ENCODE measurements at regions of chr13 and their contacts with region 1.

Region 1: DNA sequence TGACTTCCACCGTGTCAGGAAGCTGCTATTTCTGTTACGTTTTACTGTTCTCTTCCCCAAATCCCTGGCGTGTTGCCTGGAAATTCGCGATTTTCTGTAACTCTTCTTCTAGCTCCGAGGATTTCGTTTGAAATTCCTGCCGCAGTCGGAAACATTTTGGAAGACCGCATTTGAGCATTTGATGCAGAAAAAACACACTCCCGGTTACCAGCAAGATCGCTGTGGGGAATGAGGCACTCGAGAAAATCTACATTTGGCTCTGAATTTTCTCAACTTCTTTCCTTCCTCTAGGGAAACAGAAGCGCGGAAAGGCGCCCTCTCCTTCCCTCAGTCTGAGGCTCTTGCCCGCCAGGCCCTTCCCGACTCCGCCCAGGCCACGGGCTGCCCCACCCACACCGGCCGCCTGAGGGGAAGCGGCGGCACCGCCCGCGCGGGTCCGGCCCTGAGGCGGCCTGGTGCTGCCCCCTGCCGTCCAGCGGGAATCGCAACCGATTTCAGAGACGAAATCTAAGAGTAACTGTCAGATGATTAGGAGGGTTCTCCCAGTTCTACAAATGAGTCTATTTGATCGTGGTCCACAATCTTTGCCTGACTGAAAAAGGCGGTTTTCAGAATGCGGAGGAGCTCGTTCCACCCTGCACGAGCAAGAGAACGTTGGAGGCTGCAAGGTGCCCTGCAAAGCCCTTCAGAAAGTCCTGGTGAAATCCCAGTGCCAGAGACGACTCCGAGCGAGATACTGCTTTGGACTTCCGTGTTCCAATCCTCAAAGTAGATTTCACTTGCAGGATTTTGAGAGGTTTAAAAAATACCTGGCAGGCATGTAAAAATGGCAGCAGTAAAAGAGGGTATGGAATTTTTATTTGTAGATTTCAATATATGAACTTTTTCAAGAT is 18.4 kb upstream of the TUBGCP3 start:
- DNase-seq: peak; percentile 95
- CTCF ChIP-seq: peak; percentile 90

Region 2: DNA sequence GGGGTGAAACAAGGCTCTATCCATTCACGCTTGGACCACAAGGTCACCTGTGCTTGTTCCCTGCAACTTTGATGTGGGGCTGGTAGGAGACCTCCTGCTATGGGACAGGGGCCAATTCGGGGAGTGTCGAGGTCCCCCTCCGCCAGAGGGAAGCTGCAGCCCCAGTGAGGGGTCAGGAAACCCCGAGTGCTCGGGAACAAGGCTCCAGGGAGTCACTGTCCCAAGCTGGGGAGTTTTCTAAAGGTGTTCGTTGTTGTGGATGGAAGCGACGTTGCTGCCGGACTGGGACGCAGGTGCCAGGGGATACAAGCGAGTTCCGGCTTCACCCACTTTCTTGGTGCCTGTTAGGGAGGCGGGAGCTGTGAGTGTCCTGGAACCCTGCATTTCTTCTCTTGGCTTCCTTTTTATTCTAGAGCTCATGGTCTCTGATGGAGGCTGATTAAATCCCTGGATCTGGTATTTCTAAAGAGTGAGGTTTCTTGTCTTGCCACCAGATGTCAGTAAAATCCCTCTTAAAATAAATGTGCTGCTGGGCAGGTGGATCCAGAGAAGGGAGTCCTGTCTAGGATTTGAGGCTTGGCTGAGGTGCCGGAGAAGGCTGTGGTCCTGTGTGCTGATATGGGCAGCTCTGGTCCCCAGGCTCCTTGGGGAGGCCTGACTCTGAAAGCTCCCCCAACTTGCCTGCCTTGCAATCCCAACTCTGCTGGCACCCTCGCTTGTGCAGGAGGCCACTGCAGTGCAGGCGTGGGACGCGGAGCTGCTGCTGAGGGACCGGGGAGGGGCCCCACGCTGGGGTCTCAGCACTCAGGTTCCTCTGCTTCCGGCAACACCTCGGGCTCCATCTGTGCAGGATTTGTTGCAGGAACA is 1132.0 kb before region 1 on chr13:
- CTCF ChIA-PET with region 1: interaction called, 27 read pairs
- POLR2A ChIA-PET with region 1: no interaction called
- DNase-seq: peak; percentile 63
- CTCF ChIP-seq: peak; percentile 42

Region 3: GRCh38 chr13:112443995-112444860 is 162.1 kb before region 1 on chr13:
- CTCF ChIA-PET with region 1: interaction called, 15 read pairs
- POLR2A ChIA-PET with region 1: no interaction called
- DNase-seq: peak; percentile 81
- CTCF ChIP-seq: peak; percentile 89

Region 4: DNA sequence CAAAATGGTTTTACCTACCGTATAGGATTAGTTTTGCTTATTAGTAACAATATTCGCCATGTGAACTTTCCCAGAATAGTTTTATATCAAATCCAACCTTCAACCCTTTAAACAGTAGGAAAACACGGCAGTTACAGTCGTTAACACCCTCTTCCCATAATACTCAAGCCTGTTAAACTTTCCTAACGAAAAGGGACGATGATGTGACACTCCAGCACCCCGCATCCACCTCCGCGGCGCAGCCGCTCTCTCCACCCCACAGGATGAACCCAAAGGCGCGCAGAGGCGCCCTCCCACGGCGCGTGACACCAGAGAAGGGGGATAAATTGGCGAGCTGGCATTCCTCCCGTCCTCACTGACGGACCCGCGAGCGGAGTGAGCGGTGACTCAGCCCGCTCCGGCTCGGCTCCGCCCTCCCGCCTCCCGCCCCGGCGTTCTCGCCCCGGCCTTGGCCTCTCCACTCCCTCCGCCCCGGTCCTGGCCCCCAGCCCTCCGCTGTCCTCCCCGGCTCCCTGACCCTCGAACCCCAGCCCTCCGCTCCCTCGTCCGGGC is 19.1 kb before region 1 on chr13:
- CTCF ChIA-PET with region 1: interaction called, 22 read pairs
- POLR2A ChIA-PET with region 1: no interaction called
- DNase-seq: peak; percentile 84
- CTCF ChIP-seq: peak; percentile 13

Region 5: DNA sequence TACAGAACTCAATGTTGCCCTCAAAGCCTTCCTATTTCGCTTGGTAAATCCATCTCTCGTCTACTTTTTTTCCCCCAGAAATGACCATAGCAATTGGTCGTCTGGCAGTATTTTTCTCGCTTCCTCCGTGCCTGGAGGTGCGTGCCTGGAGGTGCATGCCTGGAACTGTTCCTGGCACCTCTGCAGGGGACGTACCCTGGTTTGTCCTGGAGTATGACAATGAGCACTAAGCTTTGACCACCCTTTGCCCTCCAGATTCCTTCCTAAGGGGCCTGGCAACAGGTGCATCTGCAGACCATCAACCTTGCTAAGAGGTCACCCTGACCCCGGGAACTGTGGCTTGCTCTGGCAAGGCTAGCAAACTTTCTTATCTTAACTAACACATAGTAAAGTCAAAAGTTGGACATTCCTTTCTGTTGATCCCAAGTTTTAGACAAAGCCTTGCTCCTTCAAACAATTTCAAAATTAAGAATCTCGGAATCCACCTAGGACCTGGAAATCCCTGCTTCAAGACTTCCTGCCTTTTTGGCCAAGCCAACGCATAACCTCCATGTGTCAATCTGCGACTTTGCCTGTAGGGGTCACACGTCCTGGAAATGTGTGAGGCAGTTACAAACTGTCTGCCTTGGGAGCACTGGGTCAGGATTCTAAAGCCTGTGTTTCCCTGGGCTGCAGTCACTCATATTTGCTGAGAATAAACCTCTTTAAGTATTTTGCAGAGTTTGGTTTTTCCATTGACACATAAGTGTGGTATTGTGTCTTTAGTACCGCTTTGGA is 10.4 kb after region 1 on chr13:
- CTCF ChIA-PET with region 1: interaction called, 11 read pairs
- POLR2A ChIA-PET with region 1: no interaction called
- DNase-seq: peak; percentile 68
- CTCF ChIP-seq: peak; percentile 58